ENCODE measurements at regions of chr2 and their contacts with region 1.

Region 1: GRCh38 chr2:186862869-186863709 is 14.1 kb upstream of the ZSWIM2 start:
- DNase-seq: peak; percentile 48 to 75 (median 68)
- H3K4me3 ChIP-seq: no peak overlapping the region
- H3K27ac ChIP-seq: no peak overlapping the region
- H3K4me1 ChIP-seq: peaks cover 0 to 2% (median 0%) of the 10 kb centered on the region in 4 experiments
- H3K27me3 ChIP-seq: no peaks in the 10 kb centered on the region

Region 2: GRCh38 chr2:186806591-186806990 is 56.5 kb before region 1 on chr2:
- CTCF ChIA-PET with region 1: no interaction called
- POLR2A ChIA-PET with region 1: no interaction called
- DNase-seq: no peak
- H3K4me3 ChIP-seq: no peak overlapping the region
- H3K27ac ChIP-seq: no peak overlapping the region
- H3K4me1 ChIP-seq: no peaks in the 10 kb centered on the region
- H3K27me3 ChIP-seq: no peaks in the 10 kb centered on the region

Region 3: DNA sequence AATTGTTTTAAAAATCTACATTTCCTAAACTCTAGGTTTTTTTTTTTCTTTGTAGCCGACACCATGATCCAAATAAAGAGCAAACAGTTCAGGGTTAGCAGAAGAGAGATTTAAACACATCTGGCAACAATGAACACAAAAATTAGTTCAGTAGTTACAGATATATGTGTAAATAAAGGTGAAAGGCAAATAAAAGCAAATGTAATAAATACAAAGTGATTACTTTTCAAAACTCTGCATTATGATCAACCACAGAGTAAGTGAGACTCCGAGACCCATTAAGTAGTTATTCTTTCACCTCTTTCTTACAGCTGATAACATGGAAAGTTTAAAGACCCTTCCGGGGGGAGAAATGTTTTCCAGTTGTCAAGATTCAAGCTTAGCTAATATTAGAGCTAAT is 584.2 kb after region 1 on chr2:
- CTCF ChIA-PET with region 1: interaction called, 18 read pairs
- POLR2A ChIA-PET with region 1: no interaction called
- DNase-seq: no peak
- H3K4me3 ChIP-seq: peak overlapping the region in 6 of 7 experiments; percentile 67 to 95 (median 78)
- H3K27ac ChIP-seq: peak overlapping the region; percentile 68 to 86
- H3K4me1 ChIP-seq: peaks cover 4 to 24% (median 11%) of the 10 kb centered on the region in 4 experiments
- H3K27me3 ChIP-seq: no peaks in the 10 kb centered on the region

Region 4: GRCh38 chr2:187453078-187453641 is 590.1 kb after region 1 on chr2:
- CTCF ChIA-PET with region 1: interaction called, 18 read pairs
- POLR2A ChIA-PET with region 1: no interaction called
- DNase-seq: peak; percentile 49 to 68 (median 55)
- H3K4me3 ChIP-seq: no peak overlapping the region
- H3K27ac ChIP-seq: no peak overlapping the region
- H3K4me1 ChIP-seq: peaks cover 3 to 5% (median 4%) of the 10 kb centered on the region in 4 experiments
- H3K27me3 ChIP-seq: no peaks in the 10 kb centered on the region

Measured in common myeloid progenitor, CD34-positive (primary cell).